ENCODE measurements at regions of chr11 and their contacts with region 1.

Region 1: GRCh38 chr11:128956401-128957201 is 13.9 kb upstream of the TP53AIP1 start:
- DNase-seq: peak; percentile 38 to 59 (median 46)
- ATAC-seq: peak; percentile 91
- H3K4me3 ChIP-seq: no peak overlapping the region
- H3K27ac ChIP-seq: no peak overlapping the region
- H3K4me1 ChIP-seq: no peaks in the 10 kb centered on the region
- H3K27me3 ChIP-seq: peaks cover 0 to 4% of the 10 kb centered on the region in 2 experiments; a peak in 2 of 5 replicates
- CTCF ChIP-seq: peak; percentile 62 to 76 (median 63); a peak in 5 of 6 replicates
- EP300 ChIP-seq: no peak
- POLR2A ChIP-seq: no peak
- RAD21 ChIP-seq: peak; percentile 76 to 83

Region 2: GRCh38 chr11:128039140-128040021 is 917.2 kb before region 1 on chr11:
- CTCF ChIA-PET with region 1: no interaction called
- POLR2A ChIA-PET with region 1: no interaction called
- in situ Hi-C with region 1: no loop called
- intact Hi-C with region 1: loop called (anchors 10 kb)
- DNase-seq: no peak
- ATAC-seq: no peak
- H3K4me3 ChIP-seq: no peak overlapping the region
- H3K27ac ChIP-seq: no peak overlapping the region
- H3K4me1 ChIP-seq: no peaks in the 10 kb centered on the region
- H3K27me3 ChIP-seq: no peaks in the 10 kb centered on the region
- CTCF ChIP-seq: no peak
- EP300 ChIP-seq: no peak
- POLR2A ChIP-seq: no peak
- RAD21 ChIP-seq: no peak

Region 3: DNA sequence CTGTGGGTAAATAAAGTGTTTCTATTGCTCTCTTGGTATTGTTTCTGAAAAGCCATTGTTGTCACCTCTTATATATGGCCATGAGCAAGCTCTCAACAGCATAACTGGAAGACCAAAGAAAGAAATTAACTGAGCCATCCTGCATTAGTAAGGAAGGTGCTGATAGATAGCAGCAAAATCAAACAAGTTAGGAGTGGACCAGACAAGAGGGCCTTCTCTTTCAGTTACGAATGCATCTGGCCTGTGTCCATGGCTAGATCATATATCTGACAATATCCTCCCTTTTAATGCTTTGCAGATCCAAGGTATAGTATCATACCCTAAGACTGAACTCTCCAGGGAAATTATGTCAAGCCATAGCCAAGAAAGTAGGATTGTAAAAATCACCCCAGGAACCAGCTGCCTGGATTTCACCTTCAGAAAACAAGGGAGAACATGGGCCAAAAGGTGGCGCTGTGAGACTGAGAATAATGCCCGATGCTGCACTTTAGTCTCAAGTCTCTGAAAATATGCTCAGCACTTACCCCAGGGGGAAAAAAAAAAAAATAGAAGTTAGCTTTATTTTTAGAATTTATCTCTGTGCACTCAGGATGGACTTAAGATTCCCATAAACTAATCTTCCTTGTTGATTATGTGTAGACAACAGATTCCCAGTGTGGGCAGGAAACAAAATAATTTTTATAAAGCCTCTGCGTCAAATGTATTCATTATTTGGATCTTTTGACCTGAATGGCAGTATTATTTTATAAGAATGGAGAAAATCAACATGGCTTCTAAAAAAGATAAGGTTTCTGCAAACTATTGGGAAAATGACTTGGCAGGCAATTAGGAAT is 784.3 kb before region 1 on chr11:
- CTCF ChIA-PET with region 1: interaction called, 3 read pairs
- POLR2A ChIA-PET with region 1: no interaction called
- in situ Hi-C with region 1: no loop called
- intact Hi-C with region 1: loop called (anchors 5 kb)
- DNase-seq: peak; percentile 14 to 73 (median 30)
- ATAC-seq: peak; percentile 88
- H3K4me3 ChIP-seq: no peak overlapping the region
- H3K27ac ChIP-seq: no peak overlapping the region
- H3K4me1 ChIP-seq: no peaks in the 10 kb centered on the region
- H3K27me3 ChIP-seq: no peaks in the 10 kb centered on the region
- CTCF ChIP-seq: peak; percentile 65 to 81 (median 66)
- EP300 ChIP-seq: no peak
- POLR2A ChIP-seq: no peak
- RAD21 ChIP-seq: peak; percentile 75 to 76

Region 4: GRCh38 chr11:128879817-128880216 is 76.8 kb before region 1 on chr11:
- CTCF ChIA-PET with region 1: interaction called, 23 read pairs
- POLR2A ChIA-PET with region 1: interaction called, 4 read pairs
- in situ Hi-C with region 1: loop called (anchors 5 kb)
- intact Hi-C with region 1: loop called (anchors 1 kb)
- DNase-seq: no peak
- ATAC-seq: no peak
- H3K4me3 ChIP-seq: no peak overlapping the region
- H3K27ac ChIP-seq: no peak overlapping the region
- H3K4me1 ChIP-seq: no peaks in the 10 kb centered on the region
- H3K27me3 ChIP-seq: no peaks in the 10 kb centered on the region; a peak in 1 of 5 replicates
- CTCF ChIP-seq: no peak
- EP300 ChIP-seq: no peak
- POLR2A ChIP-seq: no peak
- RAD21 ChIP-seq: no peak

Region 5: DNA sequence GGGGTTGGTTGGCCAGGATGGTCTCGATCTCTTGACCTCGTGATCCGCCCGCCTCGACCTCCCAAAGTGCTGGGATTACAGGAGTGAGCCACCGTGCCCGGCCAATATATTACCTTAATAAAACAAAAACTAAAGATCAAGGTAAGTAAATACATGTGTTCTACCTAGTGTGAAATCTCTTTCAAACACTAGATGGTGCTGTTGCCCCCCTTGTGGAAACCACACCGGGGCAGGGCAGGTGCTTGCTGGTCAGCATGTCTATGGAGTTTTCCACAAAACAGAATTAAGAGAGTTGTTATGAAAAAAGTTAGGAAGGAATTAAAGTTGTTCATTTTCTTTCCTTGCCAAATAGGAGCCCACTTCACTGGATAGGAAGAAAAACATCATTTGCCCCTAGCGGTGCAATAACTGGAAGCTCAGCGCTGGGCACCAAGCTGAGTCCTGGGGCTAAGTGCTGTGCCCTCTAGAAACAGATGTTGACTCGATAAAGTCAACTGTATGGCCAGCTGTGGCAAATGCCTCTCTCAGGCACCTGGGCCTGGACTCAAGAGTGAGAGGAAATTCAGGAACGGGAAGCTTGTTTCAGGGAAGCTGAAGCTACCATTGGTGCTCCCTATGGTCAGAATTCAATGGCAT is 71.8 kb before region 1 on chr11:
- CTCF ChIA-PET with region 1: interaction called, 23 read pairs
- POLR2A ChIA-PET with region 1: interaction called, 4 read pairs
- in situ Hi-C with region 1: no loop called
- intact Hi-C with region 1: loop called (anchors 1 kb)
- DNase-seq: peak; percentile 61 to 70 (median 67)
- ATAC-seq: peak; percentile 96
- H3K4me3 ChIP-seq: no peak overlapping the region
- H3K27ac ChIP-seq: no peak overlapping the region
- H3K4me1 ChIP-seq: no peaks in the 10 kb centered on the region
- H3K27me3 ChIP-seq: peaks cover 0 to 11% of the 10 kb centered on the region in 2 experiments; a peak in 2 of 5 replicates
- CTCF ChIP-seq: peak; percentile 71 to 81 (median 81)
- EP300 ChIP-seq: no peak
- POLR2A ChIP-seq: no peak
- RAD21 ChIP-seq: peak; percentile 85 to 87

Region 6: GRCh38 chr11:129331871-129332274 is 375.3 kb after region 1 on chr11:
- CTCF ChIA-PET with region 1: interaction called, 3 read pairs
- POLR2A ChIA-PET with region 1: no interaction called
- in situ Hi-C with region 1: no loop called
- intact Hi-C with region 1: loop called (anchors 10 kb)
- DNase-seq: peak; percentile 30 to 54 (median 43)
- ATAC-seq: peak; percentile 93
- H3K4me3 ChIP-seq: no peak overlapping the region
- H3K27ac ChIP-seq: no peak overlapping the region
- H3K4me1 ChIP-seq: no peaks in the 10 kb centered on the region
- H3K27me3 ChIP-seq: no peaks in the 10 kb centered on the region
- CTCF ChIP-seq: peak; percentile 58 to 76 (median 73)
- EP300 ChIP-seq: no peak
- POLR2A ChIP-seq: no peak
- RAD21 ChIP-seq: peak; percentile 24 to 61

Measured in K562 (cell line).